H1 (cell line): ENCODE measurements at regions of chr7 and their contacts with region 1.

Region 1: GRCh38 chr7:151017953-151018420 is 6.3 kb downstream of the ATG9B start:
- DNase-seq: peak in 1 of 2 experiments; percentile 99
- H3K4me3 ChIP-seq: peak overlapping the region in 2 of 4 experiments; percentile 17 to 50; a peak in 5 of 8 replicates
- H3K27ac ChIP-seq: no peak overlapping the region
- H3K4me1 ChIP-seq: peaks cover 0 to 29% (median 19%) of the 10 kb centered on the region in 4 experiments; a peak in 5 of 7 replicates
- H3K27me3 ChIP-seq: peaks cover 8 to 46% (median 39%) of the 10 kb centered on the region in 4 experiments
- CTCF ChIP-seq: peak in 2 of 3 experiments; percentile 95 to 97; a peak in 3 of 4 replicates
- EP300 ChIP-seq: peak in 1 of 2 experiments; percentile 40; a peak in 1 of 3 replicates
- POLR2A ChIP-seq: no peak
- RAD21 ChIP-seq: peak; percentile 58 to 72

Region 2: GRCh38 chr7:150937848-150938561 is 80.0 kb before region 1 on chr7:
- CTCF ChIA-PET with region 1: no interaction called
- POLR2A ChIA-PET with region 1: no interaction called
- DNase-seq: no peak
- H3K4me3 ChIP-seq: no peak overlapping the region
- H3K27ac ChIP-seq: no peak overlapping the region
- H3K4me1 ChIP-seq: peaks cover 0 to 8% (median 5%) of the 10 kb centered on the region in 4 experiments; a peak in 5 of 7 replicates
- H3K27me3 ChIP-seq: peaks cover 0 to 2% (median 0%) of the 10 kb centered on the region in 4 experiments; a peak in 1 of 7 replicates
- CTCF ChIP-seq: no peak
- EP300 ChIP-seq: no peak
- POLR2A ChIP-seq: no peak
- RAD21 ChIP-seq: no peak

Region 3: GRCh38 chr7:150974468-150975391 is 43.3 kb before region 1 on chr7:
- CTCF ChIA-PET with region 1: interaction called, 29 read pairs
- POLR2A ChIA-PET with region 1: interaction called, 3 read pairs
- DNase-seq: peak in 1 of 2 experiments; percentile 72
- H3K4me3 ChIP-seq: peak overlapping the region; percentile 33 to 93 (median 58)
- H3K27ac ChIP-seq: no peak overlapping the region
- H3K4me1 ChIP-seq: peaks cover 5 to 39% (median 31%) of the 10 kb centered on the region in 4 experiments
- H3K27me3 ChIP-seq: peaks cover 2 to 24% (median 22%) of the 10 kb centered on the region in 4 experiments
- CTCF ChIP-seq: peak in 1 of 3 experiments; percentile 23; a peak in 2 of 4 replicates
- EP300 ChIP-seq: no peak
- POLR2A ChIP-seq: no peak
- RAD21 ChIP-seq: no peak

Region 4: GRCh38 chr7:151028131-151028947 is 10.4 kb after region 1 on chr7 and contains the start of gene ABCB8:
- CTCF ChIA-PET with region 1: interaction called, 116 read pairs
- POLR2A ChIA-PET with region 1: interaction called, 18 read pairs
- DNase-seq: peak; percentile 99
- H3K4me3 ChIP-seq: peak within 1 kb of the TSS; percentile 66 to 97 (median 80)
- H3K27ac ChIP-seq: peak within 1 kb of the TSS; percentile 15; the same call in 1 of the 2 replicates
- H3K4me1 ChIP-seq: peaks cover 0 to 4% (median 2%) of the 10 kb centered on the region in 4 experiments; a peak in 2 of 7 replicates
- H3K27me3 ChIP-seq: peaks cover 0 to 4% (median 0%) of the 10 kb centered on the region in 4 experiments; a peak in 2 of 7 replicates
- CTCF ChIP-seq: peak; percentile 23 to 43 (median 30)
- EP300 ChIP-seq: no peak
- POLR2A ChIP-seq: no peak
- RAD21 ChIP-seq: peak; percentile 21 to 51; a peak in 3 of 4 replicates
- total RNA-seq, gene ABCB8: 22.2 and 27.0 TPM in 2 replicates

Region 5: GRCh38 chr7:151057989-151058780 is 40.2 kb after region 1 on chr7:
- CTCF ChIA-PET with region 1: interaction called, 17 read pairs
- POLR2A ChIA-PET with region 1: interaction called, 15 read pairs
- DNase-seq: peak; percentile 98 to 99
- H3K4me3 ChIP-seq: peak overlapping the region; percentile 59 to 91 (median 78)
- H3K27ac ChIP-seq: peak overlapping the region; percentile 61; the same call in 1 of the 2 replicates
- H3K4me1 ChIP-seq: peaks cover 9 to 41% (median 29%) of the 10 kb centered on the region in 4 experiments
- H3K27me3 ChIP-seq: peaks cover 0 to 9% (median 4%) of the 10 kb centered on the region in 4 experiments; a peak in 5 of 7 replicates
- CTCF ChIP-seq: no peak
- EP300 ChIP-seq: no peak
- POLR2A ChIP-seq: peak in 1 of 2 experiments; percentile 49; a peak in 1 of 3 replicates
- RAD21 ChIP-seq: no peak

Region 6: DNA sequence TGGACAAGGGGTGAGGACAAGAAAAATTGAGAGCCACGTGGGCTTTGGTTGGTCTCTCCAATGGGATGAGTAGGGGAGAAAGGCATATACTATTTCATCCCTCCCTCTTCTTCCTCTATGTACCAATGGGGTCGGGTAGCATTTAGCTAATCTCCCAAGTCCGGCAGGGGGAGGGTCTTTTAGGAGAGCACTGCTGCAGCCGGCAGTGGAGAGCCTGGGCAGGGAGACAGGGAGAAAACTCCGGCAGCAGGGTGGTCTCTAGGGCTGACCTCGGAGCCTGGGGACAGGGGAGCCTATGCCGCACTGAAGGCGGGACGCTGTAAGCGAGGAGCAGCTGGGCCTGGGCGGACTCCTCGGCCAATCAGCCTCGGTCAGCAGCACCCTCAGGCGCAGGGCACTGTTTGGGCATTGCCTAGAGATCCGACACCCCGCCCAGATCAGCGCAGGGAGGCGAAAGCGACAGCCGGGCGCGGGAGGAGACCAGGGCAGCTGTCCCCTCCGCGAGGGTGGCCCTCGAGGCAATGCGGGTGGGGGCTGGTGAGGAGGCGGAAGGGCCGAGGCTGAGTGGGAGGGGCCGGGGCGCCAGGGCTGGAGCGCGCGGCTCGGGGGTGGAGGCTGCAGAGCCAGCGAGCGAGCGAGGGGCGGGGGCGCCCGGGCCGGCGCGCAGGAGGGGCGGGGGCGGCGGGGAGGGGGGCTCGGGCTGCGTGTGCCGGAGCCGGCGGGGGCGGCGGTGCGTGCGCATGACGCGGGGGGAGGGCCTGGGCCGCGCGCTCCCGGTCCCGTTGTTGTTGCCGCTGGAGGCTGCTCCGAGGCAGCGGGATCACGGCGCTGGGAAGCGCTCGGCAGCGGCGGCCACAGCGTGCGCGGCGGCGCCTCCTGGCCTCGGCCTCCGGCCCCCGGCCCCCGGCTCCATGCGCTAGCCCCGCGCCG is 68.0 kb after region 1 on chr7 and contains the start of gene AGAP3:
- CTCF ChIA-PET with region 1: interaction called, 23 read pairs
- POLR2A ChIA-PET with region 1: interaction called, 7 read pairs
- DNase-seq: peak in 1 of 2 experiments; percentile 86
- H3K4me3 ChIP-seq: peak within 1 kb of the TSS; percentile 58 to 75 (median 66)
- H3K27ac ChIP-seq: no peak within 1 kb of the TSS
- H3K4me1 ChIP-seq: peaks cover 6 to 52% (median 31%) of the 10 kb centered on the region in 4 experiments
- H3K27me3 ChIP-seq: peaks cover 0 to 28% (median 14%) of the 10 kb centered on the region in 4 experiments; a peak in 6 of 7 replicates
- CTCF ChIP-seq: no peak
- EP300 ChIP-seq: no peak
- POLR2A ChIP-seq: peak in 1 of 2 experiments; percentile 48; a peak in 1 of 3 replicates
- RAD21 ChIP-seq: no peak
- total RNA-seq, gene AGAP3: 66.4 and 68.1 TPM in 2 replicates